ENCODE measurements at regions of chr6 and their contacts with region 1.

Region 1: GRCh38 chr6:106005013-106005412 is 81.1 kb upstream of the PRDM1 start:
- DNase-seq: no peak
- H3K4me3 Mint-ChIP-seq: no peak overlapping the region
- H3K27ac Mint-ChIP-seq: no peak overlapping the region
- H3K4me1 Mint-ChIP-seq: peaks cover 21% of the 10 kb centered on the region
- H3K27me3 Mint-ChIP-seq: peaks cover 46% of the 10 kb centered on the region

Region 2: DNA sequence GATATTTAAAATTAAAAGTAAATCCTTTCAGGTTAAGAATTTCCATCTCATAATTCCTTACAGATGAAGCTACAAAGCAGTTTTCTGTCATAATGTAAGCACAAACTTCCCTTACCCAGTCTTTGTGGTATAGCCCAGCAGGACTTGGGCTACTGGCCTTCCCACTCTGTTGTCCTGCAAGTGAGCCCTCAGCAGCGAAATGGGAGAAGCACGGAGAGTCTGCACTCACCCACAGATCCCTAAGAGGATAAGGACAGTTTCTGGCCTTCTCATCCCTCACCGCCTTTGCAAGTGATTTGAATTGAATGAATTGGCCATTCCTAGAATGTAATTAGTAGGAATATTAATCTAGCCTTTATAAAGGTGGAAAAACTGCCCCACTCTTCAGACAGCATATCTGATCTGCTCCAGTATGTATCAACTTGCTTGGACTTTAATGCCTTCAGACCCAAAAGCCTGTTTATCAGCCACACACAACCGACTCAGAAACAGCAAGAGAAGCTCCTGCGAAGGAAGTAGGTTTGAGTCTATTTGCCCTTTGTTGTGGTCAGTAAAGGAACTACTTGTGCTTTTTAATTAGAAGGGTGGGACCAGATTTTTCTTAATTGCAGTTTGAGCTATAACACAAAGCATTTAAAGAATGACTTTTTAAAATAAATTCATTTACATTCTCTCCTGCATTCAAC is 51.2 kb after region 1 on chr6:
- intact Hi-C with region 1: loop called (anchors 10 kb)
- DNase-seq: no peak
- H3K4me3 Mint-ChIP-seq: no peak overlapping the region
- H3K27ac Mint-ChIP-seq: no peak overlapping the region
- H3K4me1 Mint-ChIP-seq: peaks cover 15% of the 10 kb centered on the region
- H3K27me3 Mint-ChIP-seq: peaks cover 4% of the 10 kb centered on the region